ENCODE measurements at regions of chr19 and their contacts with region 1.

Region 1: GRCh38 chr19:18203863-18204393 is at the start of gene RAB3A:
- DNase-seq: peak; percentile 95 to 100 (median 99)
- ATAC-seq: peak; percentile 95
- H3K4me3 ChIP-seq: peak within 1 kb of the TSS; percentile 90
- H3K4me3 Mint-ChIP-seq: peak within 1 kb of the TSS; percentile 83 to 98 (median 96)
- H3K27ac ChIP-seq: peak within 1 kb of the TSS; percentile 85
- H3K27ac Mint-ChIP-seq: peak within 1 kb of the TSS; percentile 87 to 99 (median 97)
- H3K4me1 ChIP-seq: peaks cover 15 to 16% of the 10 kb centered on the region in 2 donors
- H3K4me1 Mint-ChIP-seq: peaks cover 11 to 26% (median 22%) of the 10 kb centered on the region in 7 donors
- H3K27me3 ChIP-seq: no peaks in the 10 kb centered on the region
- H3K27me3 Mint-ChIP-seq: peaks cover 0 to 8% (median 0%) of the 10 kb centered on the region in 5 donors
- total RNA-seq, gene RAB3A: 5.7 to 16.7 (median 8.8) TPM

Region 2: DNA sequence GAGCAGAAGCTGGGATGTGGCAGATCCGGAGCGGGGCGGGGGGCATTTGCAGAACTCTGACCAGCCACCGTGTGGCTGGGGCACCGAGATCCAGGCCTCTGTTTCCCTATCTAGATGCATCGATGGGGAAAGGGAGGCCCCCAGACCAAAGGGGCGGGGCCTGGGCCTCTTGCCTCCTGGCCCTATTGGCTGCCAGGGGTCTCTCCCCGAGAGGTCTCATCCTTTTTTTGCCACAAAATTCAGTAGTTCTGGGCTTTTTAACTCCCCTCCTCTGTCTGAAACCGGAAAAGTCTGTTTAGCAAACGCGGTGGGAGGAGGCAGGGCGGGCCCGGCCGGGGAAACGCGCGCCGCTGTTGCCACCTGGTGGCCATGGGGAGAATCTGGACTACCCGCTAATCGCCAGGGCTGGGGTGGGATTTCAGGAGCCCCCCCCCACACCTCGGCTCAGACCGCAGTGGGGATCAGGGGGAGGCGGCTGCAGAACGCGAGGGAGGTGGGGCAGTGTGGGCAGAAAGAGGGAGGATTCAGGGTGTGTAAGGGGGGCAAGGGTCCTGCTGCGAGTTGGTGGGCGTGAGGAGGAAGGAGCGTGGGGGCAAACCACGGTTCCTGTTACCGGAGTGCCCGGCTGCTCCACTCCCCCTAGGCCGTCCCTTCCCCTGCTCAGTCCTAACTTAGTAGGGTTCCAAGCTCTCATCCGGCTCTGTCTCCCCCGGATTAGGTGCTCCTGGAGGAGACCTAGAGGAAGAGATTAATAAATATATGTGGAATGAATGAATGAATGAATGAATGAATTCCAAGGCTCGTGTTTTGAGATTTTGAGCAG is 145.5 kb before region 1 on chr19:
- CTCF ChIA-PET with region 1: no interaction called
- POLR2A ChIA-PET with region 1: no interaction called
- intact Hi-C with region 1: no loop called
- DNase-seq: peak; percentile 76 to 88 (median 82)
- ATAC-seq: peak; percentile 97
- H3K4me3 ChIP-seq: peak overlapping the region; percentile 31
- H3K4me3 Mint-ChIP-seq: peak overlapping the region in 8 of 10 donors; percentile 32 to 62 (median 53)
- H3K27ac ChIP-seq: peak overlapping the region; percentile 62
- H3K27ac Mint-ChIP-seq: peak overlapping the region; percentile 71 to 89 (median 86)
- H3K4me1 ChIP-seq: peaks cover 8 to 13% of the 10 kb centered on the region in 2 donors
- H3K4me1 Mint-ChIP-seq: peaks cover 0 to 18% (median 16%) of the 10 kb centered on the region in 7 donors
- H3K27me3 ChIP-seq: no peaks in the 10 kb centered on the region
- H3K27me3 Mint-ChIP-seq: no peaks in the 10 kb centered on the region

Region 3: DNA sequence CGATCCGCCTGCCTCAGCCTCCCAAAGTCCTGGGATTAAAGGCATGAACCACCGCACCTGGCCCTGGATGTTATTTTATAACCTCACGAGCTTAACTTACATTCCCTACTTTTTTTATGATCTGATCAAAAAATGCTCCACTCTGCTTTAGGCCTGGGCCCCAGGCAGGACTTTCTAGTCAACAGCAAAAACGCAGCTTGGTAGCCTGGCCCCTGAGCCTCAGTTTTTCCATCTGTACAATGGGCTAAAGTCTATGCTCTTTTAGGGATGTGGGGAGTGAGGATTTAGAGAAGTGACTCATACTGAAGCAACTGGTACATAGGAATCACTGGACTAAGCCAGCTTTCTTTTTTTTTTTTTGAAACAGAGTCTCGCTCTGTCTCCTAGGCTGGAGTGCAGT is 62.9 kb before region 1 on chr19:
- CTCF ChIA-PET with region 1: no interaction called
- POLR2A ChIA-PET with region 1: no interaction called
- intact Hi-C with region 1: no loop called
- DNase-seq: no peak
- ATAC-seq: no peak
- H3K4me3 ChIP-seq: no peak overlapping the region
- H3K4me3 Mint-ChIP-seq: no peak overlapping the region
- H3K27ac ChIP-seq: no peak overlapping the region
- H3K27ac Mint-ChIP-seq: peak overlapping the region in 1 of 9 donors; percentile 29
- H3K4me1 ChIP-seq: no peaks in the 10 kb centered on the region
- H3K4me1 Mint-ChIP-seq: no peaks in the 10 kb centered on the region
- H3K27me3 ChIP-seq: no peaks in the 10 kb centered on the region
- H3K27me3 Mint-ChIP-seq: no peaks in the 10 kb centered on the region

Region 4: DNA sequence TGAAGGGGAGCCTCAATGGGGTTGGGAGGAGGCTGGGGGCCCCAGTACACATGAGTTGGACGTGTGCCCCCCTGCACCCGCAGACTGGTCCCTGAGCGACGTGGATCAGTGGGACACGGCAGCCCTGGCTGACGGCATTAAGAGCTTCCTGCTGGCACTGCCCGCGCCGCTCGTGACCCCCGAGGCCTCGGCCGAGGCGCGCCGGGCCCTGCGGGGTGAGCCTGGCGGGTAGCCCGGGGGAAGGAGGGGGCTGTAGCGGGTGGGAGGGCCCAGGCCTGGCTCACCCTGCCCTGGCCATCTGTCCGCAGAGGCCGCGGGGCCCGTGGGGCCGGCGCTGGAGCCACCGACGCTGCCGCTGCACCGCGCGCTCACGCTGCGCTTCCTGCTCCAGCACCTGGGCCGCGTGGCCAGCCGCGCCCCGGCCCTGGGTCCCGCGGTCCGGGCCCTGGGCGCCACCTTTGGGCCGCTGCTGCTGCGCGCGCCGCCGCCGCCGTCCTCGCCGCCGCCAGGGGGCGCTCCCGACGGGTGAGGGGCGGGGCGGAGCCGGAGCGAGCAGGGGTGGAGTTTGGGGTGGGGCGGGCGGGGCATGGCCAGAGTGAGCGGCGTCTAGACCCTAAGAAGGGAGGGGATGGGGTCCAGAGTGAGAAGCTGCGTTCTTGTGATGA is 42.8 kb before region 1 on chr19:
- CTCF ChIA-PET with region 1: no interaction called
- POLR2A ChIA-PET with region 1: no interaction called
- intact Hi-C with region 1: loop called in 1 of 2 experiments (anchors 2 kb)
- DNase-seq: peak; percentile 64 to 96 (median 80)
- ATAC-seq: peak; percentile 100
- H3K4me3 ChIP-seq: no peak overlapping the region
- H3K4me3 Mint-ChIP-seq: peak overlapping the region in 8 of 10 donors; percentile 39 to 71 (median 56)
- H3K27ac ChIP-seq: peak overlapping the region; percentile 62
- H3K27ac Mint-ChIP-seq: peak overlapping the region in 4 of 9 donors; percentile 20 to 72 (median 45)
- H3K4me1 ChIP-seq: peaks cover 0 to 13% of the 10 kb centered on the region in 2 donors
- H3K4me1 Mint-ChIP-seq: peaks cover 0 to 18% (median 12%) of the 10 kb centered on the region in 7 donors
- H3K27me3 ChIP-seq: no peaks in the 10 kb centered on the region
- H3K27me3 Mint-ChIP-seq: no peaks in the 10 kb centered on the region

Region 5: GRCh38 chr19:18224525-18225354 is 20.8 kb after region 1 on chr19:
- CTCF ChIA-PET with region 1: interaction called, 3 read pairs
- POLR2A ChIA-PET with region 1: no interaction called
- intact Hi-C with region 1: loop called (anchors 1 kb)
- DNase-seq: peak; percentile 65 to 87 (median 80)
- ATAC-seq: peak; percentile 98
- H3K4me3 ChIP-seq: peak overlapping the region; percentile 46
- H3K4me3 Mint-ChIP-seq: peak overlapping the region; percentile 80 to 90 (median 87)
- H3K27ac ChIP-seq: no peak overlapping the region
- H3K27ac Mint-ChIP-seq: peak overlapping the region in 2 of 9 donors; percentile 41 to 68
- H3K4me1 ChIP-seq: peaks cover 6 to 16% of the 10 kb centered on the region in 2 donors
- H3K4me1 Mint-ChIP-seq: peaks cover 11 to 25% (median 20%) of the 10 kb centered on the region in 7 donors
- H3K27me3 ChIP-seq: peaks cover 12 to 28% of the 10 kb centered on the region in 2 donors
- H3K27me3 Mint-ChIP-seq: peaks cover 43 to 66% (median 56%) of the 10 kb centered on the region in 5 donors

Region 6: DNA sequence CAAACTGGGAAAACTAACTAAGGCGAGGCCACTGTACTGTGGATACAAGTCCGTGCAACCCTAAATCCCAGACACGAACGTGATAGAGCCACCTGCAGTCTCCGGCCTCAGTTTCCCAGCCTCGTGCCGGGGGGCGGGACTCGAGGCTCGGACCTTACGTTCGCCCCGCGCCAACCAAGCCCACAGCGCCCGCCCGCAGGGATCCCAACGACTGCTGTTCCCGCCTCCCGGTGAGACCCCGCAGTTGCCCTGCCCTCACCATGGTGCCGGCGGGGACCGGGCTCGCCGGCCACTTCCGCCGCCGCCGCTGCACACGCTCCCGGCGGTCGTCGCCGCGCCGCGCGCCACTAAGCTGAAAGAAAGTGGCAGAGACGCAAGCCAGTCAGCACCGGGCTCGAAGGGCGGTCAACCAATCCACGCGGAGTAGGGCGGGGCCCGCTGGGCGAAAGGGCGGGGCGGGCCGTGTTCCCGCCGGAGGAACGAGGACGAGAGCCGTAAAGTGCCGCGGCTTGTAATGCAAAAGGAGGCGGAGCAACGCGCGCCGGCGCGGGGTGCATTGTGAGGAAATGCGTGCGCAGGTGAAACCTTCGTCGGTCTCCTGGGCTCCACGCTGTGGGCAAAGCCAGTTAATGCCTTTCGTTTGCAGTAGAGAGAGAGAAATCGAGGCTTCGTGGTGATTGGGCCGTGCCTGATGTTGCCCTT is 119.0 kb after region 1 on chr19 and contains the start of gene LSM4:
- CTCF ChIA-PET with region 1: interaction called, 5 read pairs
- POLR2A ChIA-PET with region 1: interaction called, 9 read pairs
- intact Hi-C with region 1: loop called (anchors 1 kb)
- DNase-seq: peak; percentile 95 to 100 (median 99)
- ATAC-seq: peak; percentile 98
- H3K4me3 ChIP-seq: peak within 1 kb of the TSS; percentile 86
- H3K4me3 Mint-ChIP-seq: peak within 1 kb of the TSS; percentile 80 to 88 (median 84)
- H3K27ac ChIP-seq: peak within 1 kb of the TSS; percentile 94
- H3K27ac Mint-ChIP-seq: peak within 1 kb of the TSS; percentile 89 to 99 (median 95)
- H3K4me1 ChIP-seq: peaks cover 47 to 55% of the 10 kb centered on the region in 2 donors
- H3K4me1 Mint-ChIP-seq: peaks cover 42 to 58% (median 51%) of the 10 kb centered on the region in 7 donors
- H3K27me3 ChIP-seq: no peaks in the 10 kb centered on the region
- H3K27me3 Mint-ChIP-seq: no peaks in the 10 kb centered on the region
- total RNA-seq, gene LSM4: 45.3 to 131 (median 56.2) TPM

Region 7: DNA sequence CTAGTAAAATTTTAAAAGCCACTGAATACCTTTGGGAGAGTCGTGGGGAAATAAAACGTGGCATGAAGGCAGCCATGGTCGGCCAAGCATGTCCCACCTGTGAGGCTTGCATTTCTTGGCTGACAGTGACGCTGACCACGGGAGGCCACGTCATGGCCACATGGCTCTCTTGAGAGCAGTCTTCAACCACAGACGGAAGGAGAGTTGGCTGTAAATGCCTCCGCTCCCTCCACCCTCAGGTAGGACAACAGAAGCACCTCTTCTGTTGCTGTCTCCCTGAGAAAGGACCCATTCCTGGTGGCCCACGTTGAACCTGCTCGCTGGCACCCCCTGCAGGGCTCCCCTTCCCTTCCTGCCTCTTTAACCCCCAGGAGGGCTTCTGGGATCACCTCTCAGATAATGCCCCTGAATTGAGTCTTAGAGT is 204.1 kb after region 1 on chr19:
- CTCF ChIA-PET with region 1: no interaction called
- POLR2A ChIA-PET with region 1: no interaction called
- intact Hi-C with region 1: loop called (anchors 1 to 2 kb)
- DNase-seq: no peak
- ATAC-seq: peak; percentile 40
- H3K4me3 ChIP-seq: no peak overlapping the region
- H3K4me3 Mint-ChIP-seq: no peak overlapping the region
- H3K27ac ChIP-seq: no peak overlapping the region
- H3K27ac Mint-ChIP-seq: no peak overlapping the region
- H3K4me1 ChIP-seq: no peaks in the 10 kb centered on the region
- H3K4me1 Mint-ChIP-seq: peaks cover 0 to 7% (median 0%) of the 10 kb centered on the region in 7 donors
- H3K27me3 ChIP-seq: no peaks in the 10 kb centered on the region
- H3K27me3 Mint-ChIP-seq: peaks cover 0 to 9% (median 4%) of the 10 kb centered on the region in 5 donors

Measured in naive thymus-derived CD4-positive, alpha-beta T cell (primary cell).